Activated T-helper 1 cell treated with anti-CD3 and anti-CD28 coated beads, Interleukin-12 subunit alpha, Interleukin-12 subunit beta, Interleukin-2, Interleukin-4 antibody, amounts not matched to agents 30 ng/mL and 10 ng/mL and 1 ng/mL, durations not matched to agents 14 hours and 24 hours and 36 hours (primary cell): ENCODE measurements at regions of chr18 and their contacts with region 1.

Region 1: GRCh38 chr18:48868468-48869466 is 82.0 kb downstream of the SMAD7 start:
- DNase-seq: peak; percentile 47
- H3K4me3 Mint-ChIP-seq: peak overlapping the region; percentile 45
- H3K27ac Mint-ChIP-seq: peak overlapping the region; percentile 96
- H3K4me1 Mint-ChIP-seq: peaks cover 40% of the 10 kb centered on the region
- H3K27me3 Mint-ChIP-seq: no peaks in the 10 kb centered on the region

Region 2: GRCh38 chr18:48777026-48777743 is 91.6 kb before region 1 on chr18:
- intact Hi-C with region 1: loop called (anchors 1 kb)
- DNase-seq: peak; percentile 59
- H3K4me3 Mint-ChIP-seq: no peak overlapping the region
- H3K27ac Mint-ChIP-seq: no peak overlapping the region
- H3K4me1 Mint-ChIP-seq: peaks cover 14% of the 10 kb centered on the region
- H3K27me3 Mint-ChIP-seq: no peaks in the 10 kb centered on the region

Region 3: GRCh38 chr18:48813833-48814489 is 54.8 kb before region 1 on chr18:
- intact Hi-C with region 1: loop called (anchors 1 kb)
- DNase-seq: peak; percentile 36
- H3K4me3 Mint-ChIP-seq: peak overlapping the region; percentile 40
- H3K27ac Mint-ChIP-seq: peak overlapping the region; percentile 90
- H3K4me1 Mint-ChIP-seq: peaks cover 62% of the 10 kb centered on the region
- H3K27me3 Mint-ChIP-seq: peaks cover 4% of the 10 kb centered on the region

Region 4: GRCh38 chr18:48834413-48835031 is 34.2 kb before region 1 on chr18:
- intact Hi-C with region 1: loop called (anchors 1 kb)
- DNase-seq: peak; percentile 68
- H3K4me3 Mint-ChIP-seq: peak overlapping the region; percentile 86
- H3K27ac Mint-ChIP-seq: peak overlapping the region; percentile 99
- H3K4me1 Mint-ChIP-seq: peaks cover 77% of the 10 kb centered on the region
- H3K27me3 Mint-ChIP-seq: peaks cover 2% of the 10 kb centered on the region

Region 5: DNA sequence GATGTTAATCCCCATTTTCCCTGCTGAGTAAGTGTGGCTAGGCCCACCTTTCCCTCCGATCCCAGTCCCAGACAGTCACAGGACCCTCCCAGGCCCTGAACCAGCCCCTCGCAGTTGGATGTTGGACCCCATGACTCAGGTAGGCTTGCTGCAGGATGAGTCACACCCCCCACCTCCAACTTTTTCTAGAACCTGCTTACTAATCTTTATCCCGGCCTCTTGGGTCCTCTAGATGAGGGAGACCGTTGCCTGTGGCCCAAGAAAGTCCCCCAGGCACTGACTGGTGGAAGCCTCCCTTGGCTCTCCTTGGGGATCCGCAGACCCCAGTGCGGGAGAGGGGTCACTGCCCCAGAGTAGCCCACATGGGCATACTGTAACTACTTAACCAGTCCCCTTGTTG is 16.5 kb before region 1 on chr18:
- intact Hi-C with region 1: loop called (anchors 1 kb)
- DNase-seq: no peak
- H3K4me3 Mint-ChIP-seq: no peak overlapping the region
- H3K27ac Mint-ChIP-seq: peak overlapping the region; percentile 13
- H3K4me1 Mint-ChIP-seq: peaks cover 27% of the 10 kb centered on the region
- H3K27me3 Mint-ChIP-seq: no peaks in the 10 kb centered on the region

Region 6: GRCh38 chr18:48934723-48935432 is 66.1 kb after region 1 on chr18:
- intact Hi-C with region 1: loop called (anchors 2 kb)
- DNase-seq: no peak
- H3K4me3 Mint-ChIP-seq: peak overlapping the region; percentile 48
- H3K27ac Mint-ChIP-seq: peak overlapping the region; percentile 75
- H3K4me1 Mint-ChIP-seq: peaks cover 82% of the 10 kb centered on the region
- H3K27me3 Mint-ChIP-seq: no peaks in the 10 kb centered on the region

Region 7: DNA sequence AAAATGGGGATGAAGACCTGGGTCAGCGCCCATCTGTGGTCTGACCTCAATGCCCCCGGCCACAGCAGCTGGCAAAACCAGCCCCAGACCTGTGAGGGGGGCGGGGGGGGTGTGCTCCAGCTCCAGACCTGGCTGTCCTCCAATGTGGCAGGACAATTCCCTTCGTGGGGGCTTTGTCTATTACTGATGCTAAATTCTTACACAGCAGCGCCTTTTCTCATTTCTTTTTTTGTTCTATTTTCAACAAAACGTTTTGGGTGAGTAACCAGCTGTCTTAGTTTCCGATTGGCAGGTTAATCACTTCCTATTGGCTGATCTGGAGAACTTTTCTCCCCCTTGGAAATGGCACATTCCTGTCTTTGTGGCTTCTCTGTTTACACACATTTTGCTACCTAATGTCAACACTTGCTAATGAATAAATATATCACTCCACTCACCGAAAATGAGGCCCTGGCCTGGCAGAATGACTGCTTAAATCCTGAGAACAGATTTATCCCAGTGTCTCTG is 77.6 kb after region 1 on chr18:
- intact Hi-C with region 1: no loop called
- DNase-seq: no peak
- H3K4me3 Mint-ChIP-seq: peak overlapping the region; percentile 99
- H3K27ac Mint-ChIP-seq: no peak overlapping the region
- H3K4me1 Mint-ChIP-seq: peaks cover 75% of the 10 kb centered on the region
- H3K27me3 Mint-ChIP-seq: peaks cover 2% of the 10 kb centered on the region

Region 8: DNA sequence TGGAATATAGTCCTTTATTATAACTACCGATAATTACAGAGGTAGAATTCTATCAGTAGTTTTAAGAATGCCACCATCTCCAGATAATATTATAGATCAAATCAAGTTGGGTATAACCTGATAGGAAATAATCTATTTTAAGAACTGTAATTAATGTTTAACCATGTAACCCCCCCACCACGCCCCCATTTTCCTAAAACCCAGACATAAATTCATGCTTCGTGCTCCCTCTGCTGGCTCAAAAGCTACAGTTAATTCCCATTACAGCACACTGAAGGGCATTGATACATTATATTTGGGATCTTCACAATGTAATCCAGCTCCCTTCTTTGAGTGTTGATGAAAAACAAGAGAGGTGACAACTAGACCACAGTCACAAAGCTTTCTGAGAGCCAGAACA is 310.0 kb after region 1 on chr18:
- intact Hi-C with region 1: loop called (anchors 5 kb)
- DNase-seq: no peak
- H3K4me3 Mint-ChIP-seq: no peak overlapping the region
- H3K27ac Mint-ChIP-seq: no peak overlapping the region
- H3K4me1 Mint-ChIP-seq: peaks cover 33% of the 10 kb centered on the region
- H3K27me3 Mint-ChIP-seq: peaks cover 2% of the 10 kb centered on the region